H1 (cell line): ENCODE measurements at regions of chr16 and their contacts with region 1.

Region 1: DNA sequence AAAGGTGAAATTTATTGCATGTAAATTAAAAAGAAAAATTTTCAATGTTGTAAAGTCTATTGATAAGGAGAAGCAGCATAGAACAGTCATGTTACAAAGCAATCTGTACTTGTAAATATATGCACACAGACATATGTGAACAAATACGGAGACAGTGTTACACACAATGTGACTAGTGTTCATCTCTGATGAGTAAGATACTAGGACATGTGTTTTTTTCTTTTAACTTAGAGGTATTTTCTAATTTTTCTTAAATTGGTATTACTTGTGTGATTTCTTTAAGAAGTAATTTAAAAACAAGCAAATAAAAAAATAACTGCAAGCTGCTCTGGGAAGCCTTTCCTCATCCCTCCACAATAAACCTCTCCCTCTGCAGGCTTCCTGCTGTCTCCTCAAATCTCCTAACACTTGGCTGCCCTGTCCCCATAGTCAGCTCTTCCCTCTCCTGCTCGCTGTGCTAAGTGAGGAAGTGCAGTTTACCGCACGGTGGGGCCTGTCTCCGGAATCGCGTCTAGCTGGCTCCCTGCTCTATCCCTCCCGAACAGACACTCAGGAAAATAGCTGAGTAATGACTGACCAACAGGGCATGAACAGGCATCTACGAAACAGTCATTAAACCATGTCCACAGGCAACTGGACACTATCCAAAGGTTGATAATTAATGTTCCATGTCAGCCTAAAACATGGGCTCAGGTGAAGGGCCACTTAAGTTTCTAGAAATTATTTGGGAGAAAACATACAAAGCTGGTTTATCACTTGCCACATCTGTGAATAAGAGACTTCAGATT is 35.9 kb downstream of the CMTM4 start:
- DNase-seq: no peak
- H3K4me3 ChIP-seq: no peak overlapping the region
- H3K27ac ChIP-seq: no peak overlapping the region
- H3K4me1 ChIP-seq: no peaks in the 10 kb centered on the region
- H3K27me3 ChIP-seq: no peaks in the 10 kb centered on the region
- CTCF ChIP-seq: no peak
- EP300 ChIP-seq: no peak
- POLR2A ChIP-seq: no peak
- RAD21 ChIP-seq: no peak

Region 2: DNA sequence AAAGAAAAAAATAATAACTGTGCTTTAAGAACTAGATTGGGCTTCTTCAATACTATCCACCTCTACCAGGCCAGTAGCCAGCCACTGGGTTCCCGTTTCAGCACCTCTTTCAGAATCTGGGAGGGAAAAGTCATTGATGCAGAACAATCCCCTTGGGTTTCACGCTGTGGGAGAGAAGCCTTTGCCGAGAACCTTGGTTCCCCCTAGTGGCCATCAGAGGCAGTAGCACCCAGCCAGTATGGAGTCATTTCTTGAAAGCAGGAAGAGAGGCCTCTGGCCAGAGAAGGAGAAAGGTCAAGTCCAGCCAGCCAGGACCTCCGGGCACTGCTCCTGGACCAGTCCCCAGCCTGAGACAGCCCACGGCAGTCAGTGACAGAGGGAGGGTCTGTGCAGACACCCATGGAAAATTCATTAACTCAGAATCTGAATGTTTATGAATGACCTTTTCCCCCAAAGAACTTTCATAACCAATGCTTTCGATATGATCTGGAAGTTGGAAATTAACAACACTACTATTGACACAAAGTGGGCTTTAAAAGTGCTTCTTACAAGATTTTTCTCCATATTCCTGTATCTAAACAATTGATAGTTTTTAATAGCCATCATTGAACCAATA is 345.3 kb before region 1 on chr16:
- CTCF ChIA-PET with region 1: no interaction called
- POLR2A ChIA-PET with region 1: no interaction called
- DNase-seq: peak; percentile 29 to 76
- H3K4me3 ChIP-seq: no peak overlapping the region
- H3K27ac ChIP-seq: no peak overlapping the region
- H3K4me1 ChIP-seq: no peaks in the 10 kb centered on the region
- H3K27me3 ChIP-seq: no peaks in the 10 kb centered on the region
- CTCF ChIP-seq: peak; percentile 92 to 97 (median 92)
- EP300 ChIP-seq: no peak
- POLR2A ChIP-seq: no peak
- RAD21 ChIP-seq: peak; percentile 89 to 90

Region 3: DNA sequence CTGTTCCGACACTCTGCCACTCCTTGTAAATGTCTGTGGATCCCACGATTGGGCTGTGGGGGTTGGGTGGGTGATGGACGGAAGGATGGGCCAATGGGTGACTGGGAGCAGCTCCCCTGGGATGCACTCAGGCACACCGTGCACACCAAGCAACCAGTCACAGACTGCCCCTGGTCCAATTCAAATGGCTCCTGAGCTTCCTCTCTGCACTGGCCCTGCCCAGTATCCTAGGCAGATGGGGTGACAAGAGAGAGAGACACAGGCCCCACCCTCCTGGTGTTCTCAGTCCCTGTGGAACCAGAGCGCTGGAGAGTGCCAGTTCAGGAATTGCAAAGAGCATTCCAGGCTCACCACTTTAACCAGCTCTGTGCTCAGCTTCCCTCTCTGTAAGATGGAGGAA is 200.7 kb before region 1 on chr16:
- CTCF ChIA-PET with region 1: no interaction called
- POLR2A ChIA-PET with region 1: no interaction called
- DNase-seq: peak in 1 of 2 experiments; percentile 70
- H3K4me3 ChIP-seq: no peak overlapping the region
- H3K27ac ChIP-seq: no peak overlapping the region
- H3K4me1 ChIP-seq: peaks cover 0 to 4% (median 1%) of the 10 kb centered on the region in 4 experiments; a peak in 1 of 7 replicates
- H3K27me3 ChIP-seq: no peaks in the 10 kb centered on the region
- CTCF ChIP-seq: no peak
- EP300 ChIP-seq: no peak
- POLR2A ChIP-seq: no peak
- RAD21 ChIP-seq: no peak

Region 4: GRCh38 chr16:66677179-66677578 is 16.6 kb after region 1 on chr16:
- CTCF ChIA-PET with region 1: interaction called, 11 read pairs
- POLR2A ChIA-PET with region 1: interaction called, 3 read pairs
- DNase-seq: no peak
- H3K4me3 ChIP-seq: no peak overlapping the region
- H3K27ac ChIP-seq: no peak overlapping the region
- H3K4me1 ChIP-seq: 0 out of 7 replicates have a peak, but pooled peaks cover 0 to 2% (median 0%) of the 10 kb centered on the region in 4 experiments
- H3K27me3 ChIP-seq: no peaks in the 10 kb centered on the region
- CTCF ChIP-seq: no peak
- EP300 ChIP-seq: no peak
- POLR2A ChIP-seq: no peak
- RAD21 ChIP-seq: no peak

Region 5: GRCh38 chr16:66696669-66697630 is 36.3 kb after region 1 on chr16 and contains the start of gene CMTM4:
- CTCF ChIA-PET with region 1: interaction called, 10 read pairs
- POLR2A ChIA-PET with region 1: no interaction called
- DNase-seq: peak in 1 of 2 experiments; percentile 86
- H3K4me3 ChIP-seq: peak within 1 kb of the TSS; percentile 61 to 85 (median 78)
- H3K27ac ChIP-seq: peak within 1 kb of the TSS; percentile 62; the same call in 1 of the 2 replicates
- H3K4me1 ChIP-seq: peaks cover 5 to 13% (median 9%) of the 10 kb centered on the region in 4 experiments
- H3K27me3 ChIP-seq: peaks cover 0 to 1% (median 0%) of the 10 kb centered on the region in 4 experiments; a peak in 1 of 7 replicates
- CTCF ChIP-seq: peak; percentile 16 to 29 (median 29)
- EP300 ChIP-seq: no peak
- POLR2A ChIP-seq: peak; percentile 15 to 73; a peak in 1 of 3 replicates
- RAD21 ChIP-seq: peak in 1 of 2 experiments; percentile 18; a peak in 1 of 4 replicates
- total RNA-seq, gene CMTM4: 49.4 and 51.7 TPM in 2 replicates